Activated naive CD4-positive, alpha-beta T cell treated with anti-CD3 and anti-CD28 coated beads, Interleukin-2, amount 10 ng/mL, durations not matched to agents 7 days and 5 days (primary cell): ENCODE measurements at regions of chr18 and their contacts with region 1.

Region 1: DNA sequence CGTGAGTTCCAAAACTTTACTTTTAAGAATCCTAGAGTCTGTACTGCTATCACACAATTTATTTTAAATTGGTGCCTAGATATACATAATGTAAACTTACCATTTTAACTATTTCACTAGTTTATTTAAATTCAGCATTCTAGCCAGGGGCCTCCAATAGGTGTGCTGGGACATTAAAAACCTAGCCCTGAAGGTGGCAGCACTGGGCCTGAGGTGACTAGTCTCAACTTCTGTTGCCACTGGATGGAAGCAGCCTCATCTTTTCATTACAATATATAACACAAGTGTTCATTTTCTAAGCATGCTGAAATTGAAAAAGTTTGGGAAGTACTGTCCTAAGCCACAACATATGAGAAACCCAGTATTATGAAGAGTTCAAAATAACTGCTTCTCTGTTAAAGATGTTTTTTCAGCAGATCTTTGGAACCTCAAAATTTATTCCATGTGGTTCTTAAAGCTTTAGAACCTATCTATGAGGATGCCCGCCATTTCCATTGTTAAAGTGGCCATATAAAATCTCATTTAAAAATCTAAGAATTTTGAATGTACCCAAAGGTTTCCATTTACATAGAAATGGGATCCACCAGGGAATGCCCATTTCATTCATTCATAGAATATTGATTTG is 2.9 kb upstream of the RBBP8 start:
- DNase-seq: peak; percentile 90
- H3K4me3 Mint-ChIP-seq: no peak overlapping the region
- H3K27ac Mint-ChIP-seq: no peak overlapping the region
- H3K4me1 Mint-ChIP-seq: peaks cover 23% of the 10 kb centered on the region
- H3K27me3 Mint-ChIP-seq: peaks cover 4% of the 10 kb centered on the region

Region 2: GRCh38 chr18:22983175-22983574 is 53.0 kb after region 1 on chr18:
- CTCF ChIA-PET with region 1: interaction called, 39 read pairs
- DNase-seq: no peak
- H3K4me3 Mint-ChIP-seq: no peak overlapping the region
- H3K27ac Mint-ChIP-seq: no peak overlapping the region
- H3K4me1 Mint-ChIP-seq: peaks cover 4% of the 10 kb centered on the region
- H3K27me3 Mint-ChIP-seq: no peaks in the 10 kb centered on the region

Region 3: DNA sequence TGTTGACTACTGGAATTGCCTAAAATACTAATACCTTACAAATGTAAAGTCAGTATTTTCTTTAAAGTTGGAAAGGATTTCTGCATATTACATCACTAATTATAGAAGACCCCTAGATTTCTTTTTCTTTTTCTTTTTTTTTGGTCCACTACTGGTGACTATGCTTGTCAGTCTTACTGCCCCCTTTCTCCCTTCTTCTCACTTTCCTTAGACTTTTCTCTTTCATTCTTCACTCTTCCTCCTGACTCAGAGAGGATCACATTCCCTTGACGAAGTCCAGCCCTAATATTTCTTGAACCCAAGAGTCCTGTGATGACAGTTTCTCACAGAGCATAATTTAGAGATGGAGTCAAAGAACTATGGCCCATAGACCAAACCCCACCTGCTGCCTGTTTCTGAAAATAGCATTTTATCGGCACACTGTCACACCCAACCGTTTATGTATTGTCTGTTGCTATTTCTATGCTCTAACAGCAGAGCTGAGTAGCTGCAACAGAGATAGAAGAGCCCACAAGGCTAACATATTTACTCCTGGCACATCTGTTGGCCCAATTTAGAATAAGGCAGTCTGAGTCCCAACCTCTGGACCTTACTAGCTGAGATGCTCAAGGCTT is 482.3 kb after region 1 on chr18:
- CTCF ChIA-PET with region 1: interaction called, 10 read pairs
- DNase-seq: no peak
- H3K4me3 Mint-ChIP-seq: no peak overlapping the region
- H3K27ac Mint-ChIP-seq: no peak overlapping the region
- H3K4me1 Mint-ChIP-seq: no peaks in the 10 kb centered on the region
- H3K27me3 Mint-ChIP-seq: no peaks in the 10 kb centered on the region